ENCODE measurements at regions of chr18 and their contacts with region 1.

Region 1: GRCh38 chr18:23356915-23357601 is 96.0 kb upstream of the RIOK3 start:
- DNase-seq: no peak
- H3K4me3 ChIP-seq: peak overlapping the region; percentile 32 to 54
- H3K27ac ChIP-seq: peak overlapping the region; percentile 91 to 94
- H3K4me1 ChIP-seq: peaks cover 26 to 38% of the 10 kb centered on the region in 2 donors
- H3K27me3 ChIP-seq: no peaks in the 10 kb centered on the region
- CTCF ChIP-seq: no peak

Region 2: DNA sequence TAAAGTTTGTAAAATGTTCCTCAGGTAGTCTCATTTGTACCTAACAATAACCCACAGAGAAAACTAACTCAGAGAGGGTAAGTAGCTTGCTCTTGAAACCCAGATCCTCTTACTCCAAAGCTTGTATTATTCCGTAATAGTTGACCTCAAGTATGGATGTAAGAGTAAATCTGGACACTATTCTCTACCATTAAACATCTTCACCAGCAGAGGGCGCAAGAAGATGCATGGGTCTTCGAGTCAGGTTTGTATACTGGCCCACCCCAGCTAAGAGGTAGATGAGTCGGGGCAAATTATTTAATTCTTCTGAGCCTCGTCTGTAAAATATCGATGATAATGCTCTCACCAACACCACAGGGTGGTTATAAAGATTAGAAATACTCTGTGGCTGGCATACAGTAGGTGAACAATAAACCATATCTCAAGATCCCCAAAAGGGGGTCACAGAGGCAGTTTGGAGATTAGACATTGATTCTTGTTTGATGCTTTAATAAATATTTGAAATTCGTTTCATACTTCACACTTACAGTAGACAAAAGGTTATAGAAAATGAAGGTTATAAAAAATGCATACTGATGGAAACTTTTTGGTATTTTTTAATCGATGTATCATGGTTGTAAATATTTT is 225.3 kb before region 1 on chr18:
- intact Hi-C with region 1: loop called (anchors 1 kb)
- DNase-seq: peak in 1 of 2 donors; percentile 85
- H3K4me3 ChIP-seq: no peak overlapping the region
- H3K27ac ChIP-seq: no peak overlapping the region
- H3K4me1 ChIP-seq: peaks cover 0 to 3% of the 10 kb centered on the region in 2 donors
- H3K27me3 ChIP-seq: no peaks in the 10 kb centered on the region
- CTCF ChIP-seq: peak; percentile 74 to 82 (median 75)

Region 3: GRCh38 chr18:23276451-23276850 is 80.6 kb before region 1 on chr18:
- intact Hi-C with region 1: loop called (anchors 5 kb)
- DNase-seq: no peak
- H3K4me3 ChIP-seq: no peak overlapping the region
- H3K27ac ChIP-seq: peak overlapping the region; percentile 54 to 60
- H3K4me1 ChIP-seq: peaks cover 9 to 21% of the 10 kb centered on the region in 2 donors
- H3K27me3 ChIP-seq: no peaks in the 10 kb centered on the region
- CTCF ChIP-seq: peak in 1 of 3 experiments; percentile 8

Region 4: DNA sequence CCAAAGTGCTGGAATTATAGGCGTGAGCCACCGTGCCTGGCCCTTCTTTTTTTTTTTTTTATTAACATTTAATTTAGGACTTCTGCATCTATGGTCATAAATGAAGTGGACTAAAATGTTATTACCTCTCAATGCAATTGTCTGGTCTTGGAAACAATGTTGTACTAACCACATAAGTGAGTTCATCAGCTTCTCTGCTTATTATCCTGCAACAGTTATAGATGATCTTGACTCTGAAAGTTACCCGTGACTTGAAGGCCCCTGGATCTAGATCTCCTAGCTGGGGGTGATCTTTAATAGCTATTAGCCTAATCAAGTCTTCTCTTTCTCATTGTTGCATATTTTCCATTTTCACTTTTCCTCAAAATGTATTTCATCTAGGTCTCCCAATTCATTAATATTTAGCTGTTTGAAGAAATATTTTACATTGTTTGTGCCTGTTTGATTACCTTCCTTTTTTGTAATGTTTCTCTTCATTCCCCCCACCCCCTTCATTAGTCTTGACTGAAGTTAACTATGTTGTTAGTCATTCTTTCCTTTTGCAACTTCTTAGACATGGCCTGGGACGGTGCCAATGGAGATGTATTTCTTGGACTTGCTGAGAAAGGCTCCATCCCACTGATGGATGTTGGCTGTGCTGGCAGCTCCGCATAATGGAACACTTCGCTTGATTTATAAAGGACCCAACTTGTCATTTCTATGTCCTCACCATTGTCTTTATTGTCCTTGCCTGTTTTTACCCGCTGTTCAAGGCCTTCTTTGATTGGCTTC is 45.5 kb before region 1 on chr18:
- intact Hi-C with region 1: loop called (anchors 2 kb)
- DNase-seq: peak; percentile 59 to 95
- H3K4me3 ChIP-seq: peak overlapping the region in 1 of 2 donors; percentile 32
- H3K27ac ChIP-seq: peak overlapping the region; percentile 88 to 89
- H3K4me1 ChIP-seq: peaks cover 9 to 28% of the 10 kb centered on the region in 2 donors
- H3K27me3 ChIP-seq: no peaks in the 10 kb centered on the region
- CTCF ChIP-seq: no peak

Region 5: GRCh38 chr18:23377669-23378301 is 20.7 kb after region 1 on chr18:
- intact Hi-C with region 1: loop called (anchors 2 kb)
- DNase-seq: no peak
- H3K4me3 ChIP-seq: no peak overlapping the region
- H3K27ac ChIP-seq: peak overlapping the region; percentile 80
- H3K4me1 ChIP-seq: peaks cover 8 to 25% of the 10 kb centered on the region in 2 donors
- H3K27me3 ChIP-seq: no peaks in the 10 kb centered on the region
- CTCF ChIP-seq: no peak

Region 6: GRCh38 chr18:23596183-23596582 is 239.1 kb after region 1 on chr18:
- intact Hi-C with region 1: no loop called
- DNase-seq: peak in 1 of 2 donors; percentile 59
- H3K4me3 ChIP-seq: no peak overlapping the region
- H3K27ac ChIP-seq: no peak overlapping the region
- H3K4me1 ChIP-seq: no peaks in the 10 kb centered on the region
- H3K27me3 ChIP-seq: no peaks in the 10 kb centered on the region
- CTCF ChIP-seq: no peak